ENCODE measurements at regions of chr15 and their contacts with region 1.

Region 1: DNA sequence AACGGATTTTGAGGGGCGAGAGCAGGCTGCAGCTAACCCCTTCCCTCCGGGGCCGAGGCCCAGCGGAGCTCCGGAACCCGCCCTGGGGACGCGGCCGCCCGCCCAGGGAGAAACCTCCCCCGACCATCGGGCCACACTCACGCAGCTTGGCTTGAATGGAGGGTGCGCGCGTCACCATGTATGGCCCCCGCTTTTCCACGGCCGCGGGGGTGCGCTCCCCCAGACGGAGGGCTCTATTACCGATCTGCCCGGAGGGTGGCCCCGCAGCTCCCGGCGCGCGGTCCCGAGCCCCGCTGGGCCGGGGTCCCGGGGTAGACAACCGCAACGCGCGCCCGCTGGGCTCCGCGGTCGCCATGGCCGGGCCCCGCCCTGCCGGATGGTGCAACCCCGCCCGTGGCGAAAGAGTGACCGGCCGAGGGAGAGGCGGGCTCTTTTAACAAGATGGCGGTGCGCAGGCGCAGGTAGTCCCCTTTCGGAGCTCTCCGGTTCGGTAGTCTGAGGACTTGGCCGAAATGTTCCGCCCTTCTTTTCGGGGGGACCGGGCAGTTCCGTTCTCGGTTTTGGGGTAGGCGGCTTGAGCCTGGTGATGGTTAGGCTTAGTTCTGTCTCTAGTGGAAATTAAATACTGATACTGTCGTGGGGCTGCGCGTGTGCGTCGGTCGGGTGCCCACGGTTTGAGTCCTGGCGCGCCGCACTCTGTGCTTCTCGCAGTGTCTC is at the start of gene FAM219B:
- DNase-seq: peak; percentile 86
- ATAC-seq: peak; percentile 90
- H3K4me3 ChIP-seq: peak within 1 kb of the TSS; percentile 73 to 89 (median 85)
- H3K4me3 Mint-ChIP-seq: peak within 1 kb of the TSS; percentile 98
- H3K27ac ChIP-seq: peak within 1 kb of the TSS; percentile 48 to 79
- H3K27ac Mint-ChIP-seq: peak within 1 kb of the TSS; percentile 98
- H3K4me1 ChIP-seq: peaks cover 19 to 23% of the 10 kb centered on the region in 2 donors
- H3K4me1 Mint-ChIP-seq: peaks cover 45% of the 10 kb centered on the region
- H3K27me3 ChIP-seq: no peaks in the 10 kb centered on the region
- H3K27me3 Mint-ChIP-seq: no peaks in the 10 kb centered on the region
- CTCF ChIP-seq: no peak
- total RNA-seq, gene FAM219B: 109 and 135 TPM in 2 replicates

Region 2: GRCh38 chr15:74610302-74610951 is 296.2 kb before region 1 on chr15:
- CTCF ChIA-PET with region 1: no interaction called
- POLR2A ChIA-PET with region 1: no interaction called
- intact Hi-C with region 1: no loop called
- DNase-seq: no peak
- ATAC-seq: no peak
- H3K4me3 ChIP-seq: no peak overlapping the region
- H3K4me3 Mint-ChIP-seq: no peak overlapping the region
- H3K27ac ChIP-seq: no peak overlapping the region
- H3K27ac Mint-ChIP-seq: no peak overlapping the region
- H3K4me1 ChIP-seq: peaks cover 4 to 12% of the 10 kb centered on the region in 2 donors
- H3K4me1 Mint-ChIP-seq: peaks cover 8% of the 10 kb centered on the region
- H3K27me3 ChIP-seq: no peaks in the 10 kb centered on the region
- H3K27me3 Mint-ChIP-seq: no peaks in the 10 kb centered on the region
- CTCF ChIP-seq: no peak

Region 3: DNA sequence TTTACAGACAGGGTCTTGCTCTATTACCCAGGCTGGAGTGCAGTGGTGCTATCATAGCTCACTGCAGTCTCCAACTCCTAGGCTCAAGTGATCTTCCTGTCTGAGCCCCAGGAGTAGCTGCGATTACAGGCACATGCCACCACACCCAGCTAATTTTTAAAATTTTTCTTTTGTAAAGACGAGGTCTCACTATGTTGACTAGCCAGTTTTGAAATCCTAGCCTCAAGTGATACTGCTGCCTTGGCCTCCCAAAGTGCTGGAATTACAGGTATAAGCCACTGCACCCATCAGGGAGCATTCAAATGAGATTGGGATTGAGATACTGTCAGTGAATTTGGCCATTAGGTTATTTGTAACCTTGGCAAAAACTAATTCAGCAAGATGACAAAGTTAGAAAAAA is 232.5 kb before region 1 on chr15:
- CTCF ChIA-PET with region 1: no interaction called
- POLR2A ChIA-PET with region 1: no interaction called
- intact Hi-C with region 1: no loop called
- DNase-seq: no peak
- ATAC-seq: no peak
- H3K4me3 ChIP-seq: no peak overlapping the region
- H3K4me3 Mint-ChIP-seq: no peak overlapping the region
- H3K27ac ChIP-seq: no peak overlapping the region
- H3K27ac Mint-ChIP-seq: no peak overlapping the region
- H3K4me1 ChIP-seq: no peaks in the 10 kb centered on the region
- H3K4me1 Mint-ChIP-seq: peaks cover 9% of the 10 kb centered on the region
- H3K27me3 ChIP-seq: no peaks in the 10 kb centered on the region
- H3K27me3 Mint-ChIP-seq: no peaks in the 10 kb centered on the region
- CTCF ChIP-seq: no peak

Region 4: DNA sequence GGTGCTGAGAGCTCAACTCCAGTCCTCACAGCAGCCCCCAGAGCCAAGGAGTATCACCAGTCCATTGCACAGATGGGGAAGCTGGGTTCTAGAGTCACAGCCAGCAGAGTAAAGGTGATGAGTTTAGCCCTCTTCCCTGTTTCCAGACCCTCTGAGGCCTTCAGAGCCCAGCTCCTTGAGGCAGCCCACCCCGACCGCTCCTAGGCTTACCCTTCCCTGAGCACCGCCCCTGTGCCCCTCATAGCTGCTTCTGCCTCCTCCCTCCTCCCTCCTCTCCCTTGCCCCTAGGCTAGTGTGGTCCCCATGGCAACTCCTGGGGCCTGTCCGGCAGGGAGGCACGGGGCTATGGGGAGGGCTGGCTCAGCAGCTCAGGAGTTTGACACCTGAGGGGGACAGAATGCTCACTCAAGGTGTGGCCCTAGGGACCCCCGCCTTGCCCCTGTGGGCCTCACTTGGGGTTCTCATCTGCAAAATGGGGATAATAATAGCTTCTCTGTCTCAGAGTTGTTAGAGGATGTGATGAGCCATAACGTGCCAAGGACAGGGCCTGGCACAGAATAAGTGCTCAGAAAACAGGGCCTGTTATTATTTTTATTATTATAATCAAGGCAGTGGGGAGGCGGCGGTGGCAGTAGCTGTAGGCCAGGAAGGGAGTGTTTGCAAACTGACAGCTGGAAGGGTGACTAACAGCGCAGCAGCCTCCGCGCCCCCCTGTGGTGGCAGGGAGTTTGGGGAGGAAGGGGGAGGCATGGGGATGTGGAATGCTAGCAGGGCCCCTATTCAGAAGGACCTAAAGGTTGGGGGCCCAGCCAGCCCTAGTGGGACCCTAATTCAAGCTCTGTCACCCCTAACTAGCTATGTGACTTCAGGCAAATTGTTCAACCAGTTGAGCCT is 113.2 kb before region 1 on chr15:
- CTCF ChIA-PET with region 1: interaction called, 25 read pairs
- POLR2A ChIA-PET with region 1: interaction called, 4 read pairs
- intact Hi-C with region 1: no loop called
- DNase-seq: peak; percentile 71
- ATAC-seq: no peak
- H3K4me3 ChIP-seq: peak overlapping the region in 4 of 5 experiments; percentile 7 to 38 (median 28)
- H3K4me3 Mint-ChIP-seq: peak overlapping the region; percentile 93
- H3K27ac ChIP-seq: peak overlapping the region; percentile 90 to 93
- H3K27ac Mint-ChIP-seq: peak overlapping the region; percentile 90
- H3K4me1 ChIP-seq: peaks cover 87 to 99% of the 10 kb centered on the region in 2 donors
- H3K4me1 Mint-ChIP-seq: peaks cover 91% of the 10 kb centered on the region
- H3K27me3 ChIP-seq: no peaks in the 10 kb centered on the region
- H3K27me3 Mint-ChIP-seq: no peaks in the 10 kb centered on the region
- CTCF ChIP-seq: peak; percentile 61

Region 5: GRCh38 chr15:74873036-74873755 is 33.4 kb before region 1 on chr15 and contains the start of gene SCAMP2:
- CTCF ChIA-PET with region 1: interaction called, 40 read pairs
- POLR2A ChIA-PET with region 1: interaction called, 5 read pairs
- intact Hi-C with region 1: loop called (anchors 1 kb)
- DNase-seq: peak; percentile 96
- ATAC-seq: peak; percentile 96
- H3K4me3 ChIP-seq: peak within 1 kb of the TSS; percentile 64 to 91 (median 83)
- H3K4me3 Mint-ChIP-seq: peak within 1 kb of the TSS; percentile 95
- H3K27ac ChIP-seq: peak within 1 kb of the TSS; percentile 94 to 95
- H3K27ac Mint-ChIP-seq: peak within 1 kb of the TSS; percentile 98
- H3K4me1 ChIP-seq: peaks cover 37 to 52% of the 10 kb centered on the region in 2 donors
- H3K4me1 Mint-ChIP-seq: peaks cover 42% of the 10 kb centered on the region
- H3K27me3 ChIP-seq: no peaks in the 10 kb centered on the region
- H3K27me3 Mint-ChIP-seq: no peaks in the 10 kb centered on the region
- CTCF ChIP-seq: no peak
- total RNA-seq, gene SCAMP2: 105 and 111 TPM in 2 replicates

Region 6: DNA sequence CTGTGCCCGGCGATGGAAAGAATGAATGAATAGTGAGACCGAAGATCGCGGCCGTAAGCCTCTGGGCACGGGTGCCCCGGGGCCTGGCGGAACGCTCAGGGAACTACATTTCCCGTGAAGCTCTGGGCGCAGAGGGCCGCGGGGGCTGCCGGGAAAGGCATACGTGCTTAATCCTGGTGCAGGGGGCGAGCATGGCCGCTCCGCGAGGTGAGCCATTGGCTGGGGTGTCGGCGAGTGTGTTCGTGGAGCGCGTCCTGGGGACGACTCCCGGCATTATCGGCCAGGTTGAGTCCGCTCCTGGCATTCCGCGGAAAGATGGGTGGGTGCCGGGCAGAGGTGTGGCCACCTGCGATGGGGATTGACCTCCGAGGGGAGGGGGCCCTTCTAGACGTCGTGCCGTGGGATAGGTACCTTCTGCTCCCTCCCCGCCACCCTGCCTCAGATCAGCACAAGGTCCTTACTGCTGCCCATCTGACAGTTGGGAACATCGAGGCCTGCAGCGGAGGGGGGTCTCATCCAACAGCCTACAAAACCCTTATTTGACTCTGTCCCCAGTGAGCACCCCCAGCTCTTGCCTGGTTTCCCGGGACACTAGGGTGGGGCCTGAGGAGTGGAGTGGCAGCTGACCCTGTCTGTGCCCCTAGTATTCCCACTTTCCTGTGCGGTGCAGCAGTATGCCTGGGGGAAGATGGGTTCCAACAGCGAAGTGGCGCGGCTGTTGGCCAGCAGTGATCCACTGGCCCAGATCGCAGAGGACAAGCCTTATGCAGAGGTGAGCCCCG is 16.5 kb before region 1 on chr15 and contains the start of gene MPI:
- CTCF ChIA-PET with region 1: interaction called, 25 read pairs
- POLR2A ChIA-PET with region 1: interaction called, 8 read pairs
- intact Hi-C with region 1: loop called (anchors 1 kb)
- DNase-seq: peak; percentile 87
- ATAC-seq: peak; percentile 99
- H3K4me3 ChIP-seq: peak within 1 kb of the TSS; percentile 53 to 94 (median 87)
- H3K4me3 Mint-ChIP-seq: peak within 1 kb of the TSS; percentile 93
- H3K27ac ChIP-seq: peak within 1 kb of the TSS; percentile 74 to 77
- H3K27ac Mint-ChIP-seq: peak within 1 kb of the TSS; percentile 74
- H3K4me1 ChIP-seq: peaks cover 25 to 38% of the 10 kb centered on the region in 2 donors
- H3K4me1 Mint-ChIP-seq: peaks cover 39% of the 10 kb centered on the region
- H3K27me3 ChIP-seq: no peaks in the 10 kb centered on the region
- H3K27me3 Mint-ChIP-seq: no peaks in the 10 kb centered on the region
- CTCF ChIP-seq: no peak
- total RNA-seq, gene MPI: 37.2 and 41.3 TPM in 2 replicates

Region 7: DNA sequence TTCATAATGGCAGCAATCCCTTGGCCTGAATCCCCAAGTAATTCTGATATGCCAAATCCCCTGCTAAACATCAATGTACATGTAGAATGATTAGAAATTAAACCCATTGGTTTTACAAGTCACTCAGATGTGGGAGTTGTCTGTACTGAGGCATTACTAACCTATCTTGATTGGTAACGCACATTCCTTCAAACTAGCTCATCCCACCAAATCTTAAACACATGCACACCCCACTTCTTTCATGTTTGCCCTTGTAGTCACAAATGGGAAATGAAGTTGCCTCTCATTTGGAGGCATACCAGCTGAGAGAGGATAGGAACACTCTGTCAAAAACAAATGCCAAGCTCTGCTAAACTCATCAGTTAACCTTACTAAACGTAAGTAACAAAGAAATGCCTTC is 490.9 kb after region 1 on chr15:
- CTCF ChIA-PET with region 1: no interaction called
- POLR2A ChIA-PET with region 1: no interaction called
- intact Hi-C with region 1: no loop called
- DNase-seq: no peak
- ATAC-seq: no peak
- H3K4me3 ChIP-seq: no peak overlapping the region
- H3K4me3 Mint-ChIP-seq: no peak overlapping the region
- H3K27ac ChIP-seq: no peak overlapping the region
- H3K27ac Mint-ChIP-seq: no peak overlapping the region
- H3K4me1 ChIP-seq: no peaks in the 10 kb centered on the region
- H3K4me1 Mint-ChIP-seq: peaks cover 2% of the 10 kb centered on the region
- H3K27me3 ChIP-seq: no peaks in the 10 kb centered on the region
- H3K27me3 Mint-ChIP-seq: no peaks in the 10 kb centered on the region
- CTCF ChIP-seq: no peak